Breast epithelium (tissue), 4 donors: ENCODE measurements at regions of chr1 and their contacts with region 1.

Region 1: GRCh38 chr1:14648896-14649855 is 50.7 kb downstream of the KAZN start:
- DNase-seq: no peak
- H3K4me3 ChIP-seq: no peak overlapping the region
- H3K27ac ChIP-seq: no peak overlapping the region
- H3K4me1 ChIP-seq: peaks cover 0 to 3% of the 10 kb centered on the region in 2 donors
- H3K27me3 ChIP-seq: no peaks in the 10 kb centered on the region
- CTCF ChIP-seq: no peak
- POLR2A ChIP-seq: no peak

Region 2: GRCh38 chr1:13916530-13916929 is 732.6 kb before region 1 on chr1:
- intact Hi-C with region 1: loop called (anchors 5 kb)
- DNase-seq: no peak
- H3K4me3 ChIP-seq: no peak overlapping the region
- H3K27ac ChIP-seq: no peak overlapping the region
- H3K4me1 ChIP-seq: no peaks in the 10 kb centered on the region
- H3K27me3 ChIP-seq: no peaks in the 10 kb centered on the region
- CTCF ChIP-seq: no peak
- POLR2A ChIP-seq: no peak